Activated CD4-positive, alpha-beta memory T cell treated with anti-CD3 and anti-CD28 coated beads, Interleukin-2, amount 10 ng/mL, durations not matched to agents 7 days and 5 days (primary cell): ENCODE measurements at regions of chr9 and their contacts with region 1.

Region 1: GRCh38 chr9:35696525-35697215 is 6.9 kb upstream of the TPM2 start:
- DNase-seq: peak; percentile 60
- H3K4me3 Mint-ChIP-seq: no peak overlapping the region
- H3K27ac Mint-ChIP-seq: no peak overlapping the region
- H3K4me1 Mint-ChIP-seq: peaks cover 4% of the 10 kb centered on the region
- H3K27me3 Mint-ChIP-seq: no peaks in the 10 kb centered on the region

Region 2: GRCh38 chr9:35138682-35139470 is 557.8 kb before region 1 on chr9:
- CTCF ChIA-PET with region 1: interaction called, 10 read pairs
- POLR2A ChIA-PET with region 1: no interaction called
- DNase-seq: no peak
- H3K4me3 Mint-ChIP-seq: no peak overlapping the region
- H3K27ac Mint-ChIP-seq: no peak overlapping the region
- H3K4me1 Mint-ChIP-seq: no peaks in the 10 kb centered on the region
- H3K27me3 Mint-ChIP-seq: no peaks in the 10 kb centered on the region

Region 3: GRCh38 chr9:35537913-35538312 is 158.8 kb before region 1 on chr9:
- CTCF ChIA-PET with region 1: no interaction called
- POLR2A ChIA-PET with region 1: no interaction called
- DNase-seq: no peak
- H3K4me3 Mint-ChIP-seq: no peak overlapping the region
- H3K27ac Mint-ChIP-seq: no peak overlapping the region
- H3K4me1 Mint-ChIP-seq: no peaks in the 10 kb centered on the region
- H3K27me3 Mint-ChIP-seq: peaks cover 17% of the 10 kb centered on the region

Region 4: GRCh38 chr9:35616681-35617459 is 79.8 kb before region 1 on chr9:
- CTCF ChIA-PET with region 1: interaction called, 37 read pairs
- POLR2A ChIA-PET with region 1: interaction called, 8 read pairs
- DNase-seq: peak; percentile 74
- H3K4me3 Mint-ChIP-seq: peak overlapping the region; percentile 73
- H3K27ac Mint-ChIP-seq: peak overlapping the region; percentile 42
- H3K4me1 Mint-ChIP-seq: peaks cover 43% of the 10 kb centered on the region
- H3K27me3 Mint-ChIP-seq: peaks cover 3% of the 10 kb centered on the region

Region 5: DNA sequence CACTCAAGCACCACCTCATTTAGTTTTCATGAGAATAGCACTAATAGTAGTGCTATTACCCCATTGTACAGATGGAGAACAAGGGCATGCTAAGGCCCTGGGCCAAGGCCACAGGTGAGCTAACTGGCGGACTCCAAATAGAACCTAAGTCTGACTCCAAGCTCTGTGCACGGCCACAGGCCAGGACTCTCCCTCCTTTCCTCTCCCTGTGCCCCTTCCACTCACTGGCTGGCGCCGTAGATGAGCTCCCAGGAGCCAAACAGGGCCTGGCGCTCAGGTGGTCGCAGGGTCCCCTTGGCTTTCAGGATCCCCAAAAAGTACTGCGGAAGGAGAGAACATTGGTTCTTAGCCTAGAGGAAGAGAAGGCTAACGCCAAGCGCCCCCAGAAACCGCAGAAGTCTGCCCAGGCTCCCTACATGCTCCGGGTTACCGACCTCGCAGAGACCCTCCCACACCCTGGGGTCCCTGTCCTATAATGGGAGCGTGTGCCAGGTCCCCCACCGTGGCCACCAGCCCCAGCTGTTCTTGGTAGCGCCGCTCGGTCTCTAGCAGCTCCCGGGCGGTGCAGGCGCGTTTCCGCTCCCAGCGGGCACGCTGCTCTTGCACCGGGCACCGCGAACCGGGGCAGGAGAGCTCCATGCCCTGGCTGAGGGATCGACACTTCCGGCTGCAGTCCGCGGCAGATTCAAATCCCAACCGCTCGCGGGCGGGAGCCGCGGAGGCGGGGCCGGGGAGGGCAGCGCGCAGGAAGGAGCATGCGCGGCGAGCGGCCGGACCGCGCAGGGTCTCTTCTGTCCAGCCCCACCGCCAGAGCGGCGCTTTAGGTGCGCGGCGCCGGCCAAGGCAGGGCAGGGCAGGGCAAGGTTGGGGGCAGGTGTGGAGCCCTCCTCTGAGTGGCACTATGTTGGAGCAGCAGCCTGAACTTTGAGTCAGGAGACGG is 31.9 kb before region 1 on chr9 and contains the start of gene ARHGEF39:
- CTCF ChIA-PET with region 1: interaction called, 60 read pairs
- POLR2A ChIA-PET with region 1: interaction called, 11 read pairs
- DNase-seq: peak; percentile 87
- H3K4me3 Mint-ChIP-seq: peak within 1 kb of the TSS; percentile 80
- H3K27ac Mint-ChIP-seq: peak within 1 kb of the TSS; percentile 86
- H3K4me1 Mint-ChIP-seq: peaks cover 67% of the 10 kb centered on the region
- H3K27me3 Mint-ChIP-seq: no peaks in the 10 kb centered on the region
- total RNA-seq, gene ARHGEF39: 19.1 to 19.9 TPM

Region 6: GRCh38 chr9:35711501-35712428 is 15.1 kb after region 1 on chr9:
- CTCF ChIA-PET with region 1: interaction called, 26 read pairs
- POLR2A ChIA-PET with region 1: interaction called, 3 read pairs
- DNase-seq: no peak
- H3K4me3 Mint-ChIP-seq: no peak overlapping the region
- H3K27ac Mint-ChIP-seq: peak overlapping the region; percentile 12
- H3K4me1 Mint-ChIP-seq: no peaks in the 10 kb centered on the region
- H3K27me3 Mint-ChIP-seq: no peaks in the 10 kb centered on the region

Region 7: GRCh38 chr9:35748858-35749514 is 52.3 kb after region 1 on chr9 and contains the starts of genes GBA2 and RGP1:
- CTCF ChIA-PET with region 1: interaction called, 13 read pairs
- POLR2A ChIA-PET with region 1: interaction called, 7 read pairs
- DNase-seq: peak; percentile 76
- H3K4me3 Mint-ChIP-seq: peak within 1 kb of the TSS; percentile 94
- H3K27ac Mint-ChIP-seq: peak within 1 kb of the TSS; percentile 91
- H3K4me1 Mint-ChIP-seq: peaks cover 52% of the 10 kb centered on the region
- H3K27me3 Mint-ChIP-seq: no peaks in the 10 kb centered on the region
- total RNA-seq, gene GBA2: 45.8 to 49.1 TPM
- total RNA-seq, gene RGP1: 29.1 to 29.5 TPM

Region 8: DNA sequence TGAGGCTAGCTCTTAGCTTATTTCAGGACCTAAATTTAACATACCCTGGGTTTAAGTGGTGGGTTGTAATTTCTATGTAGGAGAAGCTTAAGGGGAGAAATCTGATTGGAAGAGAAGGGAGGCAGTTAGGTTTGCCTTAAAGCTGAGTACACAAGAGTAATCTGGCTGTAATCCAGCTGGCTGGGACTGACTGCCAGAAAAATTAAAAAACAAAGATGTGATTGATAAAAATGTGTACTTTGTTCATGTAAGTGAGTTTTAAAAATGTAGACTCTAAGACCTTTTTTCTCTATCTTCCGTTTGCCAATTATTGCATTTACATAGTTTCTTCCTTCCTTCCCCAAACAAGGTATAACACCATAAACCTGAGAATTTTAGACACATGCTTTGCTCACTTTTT is 74.9 kb after region 1 on chr9:
- CTCF ChIA-PET with region 1: no interaction called
- POLR2A ChIA-PET with region 1: no interaction called
- DNase-seq: no peak
- H3K4me3 Mint-ChIP-seq: no peak overlapping the region
- H3K27ac Mint-ChIP-seq: no peak overlapping the region
- H3K4me1 Mint-ChIP-seq: no peaks in the 10 kb centered on the region
- H3K27me3 Mint-ChIP-seq: no peaks in the 10 kb centered on the region